Cardiac septum (tissue), 1 donor: ENCODE measurements at regions of chr12 and their contacts with region 1.

Region 1: DNA sequence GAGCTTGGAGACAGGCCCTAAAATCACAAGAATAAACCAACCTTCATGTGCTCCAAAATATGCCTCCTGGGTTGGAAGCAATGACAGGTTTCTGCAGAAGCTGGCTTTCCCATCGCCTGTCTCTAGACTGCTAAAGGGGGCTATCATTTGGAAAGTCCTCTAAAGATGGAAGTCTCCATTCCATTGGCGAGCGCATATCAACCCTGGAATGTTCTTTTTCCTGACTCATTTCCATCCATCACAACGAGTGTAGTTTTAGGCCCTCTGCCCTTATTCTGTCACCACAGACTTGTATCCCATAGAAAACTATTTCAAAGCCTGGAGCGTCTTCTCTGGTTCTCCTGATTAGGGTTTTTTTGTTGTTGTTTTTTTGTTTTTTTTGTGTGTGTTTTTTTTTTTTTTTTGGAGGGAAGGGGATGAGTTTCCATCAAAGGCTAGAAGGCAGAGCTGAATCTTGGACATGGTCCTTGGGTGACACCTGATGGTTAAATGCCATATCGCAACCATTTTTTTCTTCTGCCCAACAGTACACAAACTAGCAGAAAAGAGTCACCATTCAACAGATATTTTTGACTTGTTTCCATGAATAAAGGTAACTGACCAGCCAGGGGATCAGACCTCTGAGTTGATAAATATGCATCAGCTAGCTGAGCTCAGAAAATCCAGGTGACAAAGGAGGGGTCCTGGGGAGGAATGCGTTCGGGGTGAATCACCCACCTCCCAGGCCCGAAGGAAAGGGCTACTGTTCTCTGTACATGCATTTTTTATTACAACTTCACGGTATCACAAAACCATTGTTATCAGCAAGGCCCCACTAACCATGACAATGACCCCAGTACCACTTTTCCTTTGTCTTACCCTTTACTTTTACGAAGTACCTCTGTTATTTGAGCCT is 40.5 kb downstream of the KCNA5 start:
- DNase-seq: no peak

Region 2: GRCh38 chr12:4857472-4858291 is 226.5 kb before region 1 on chr12:
- intact Hi-C with region 1: loop called (anchors 10 kb)
- DNase-seq: no peak

Region 3: GRCh38 chr12:5022465-5023061 is 61.6 kb before region 1 on chr12:
- intact Hi-C with region 1: loop called (anchors 1 kb)
- DNase-seq: peak; percentile 75

Region 4: DNA sequence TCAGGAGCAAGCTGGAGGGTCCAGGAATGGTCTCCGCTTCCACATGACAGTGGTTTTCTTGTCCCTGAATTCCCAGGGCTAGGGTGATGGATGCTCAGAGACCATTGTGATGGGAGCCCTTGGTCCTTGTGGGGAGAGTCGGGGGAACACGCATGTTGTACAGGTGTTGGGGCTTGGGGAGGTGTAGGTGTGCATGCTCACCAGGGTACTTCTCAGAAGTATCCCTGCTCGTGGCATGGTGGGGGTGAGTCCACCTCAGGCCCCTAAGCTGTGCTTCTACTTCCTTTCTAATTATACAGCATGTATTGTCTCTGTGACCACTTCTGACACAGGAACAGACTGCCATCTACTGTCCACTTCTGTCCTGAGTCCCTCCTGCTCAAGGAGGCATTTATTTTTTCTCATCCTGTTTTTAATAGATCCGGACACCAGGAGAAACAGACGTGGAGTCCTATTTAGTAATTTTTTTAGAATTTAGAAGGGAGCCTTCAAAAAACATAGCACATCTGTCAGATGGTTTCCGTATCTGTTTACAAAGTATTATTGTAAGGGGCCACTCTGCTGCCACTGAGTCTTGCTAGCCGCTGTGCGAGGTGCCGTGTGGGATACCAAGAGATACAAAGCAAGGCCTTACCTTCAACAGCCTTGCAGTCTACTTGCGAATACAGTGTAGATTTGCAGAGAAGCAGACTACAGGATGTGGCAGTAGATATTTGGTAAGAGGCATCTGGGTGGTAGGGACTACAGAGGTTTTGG is 358.2 kb after region 1 on chr12:
- intact Hi-C with region 1: loop called (anchors 10 kb)
- DNase-seq: no peak